Natural killer cell (primary cell): ENCODE measurements at regions of chr15 and their contacts with region 1.

Region 1: DNA sequence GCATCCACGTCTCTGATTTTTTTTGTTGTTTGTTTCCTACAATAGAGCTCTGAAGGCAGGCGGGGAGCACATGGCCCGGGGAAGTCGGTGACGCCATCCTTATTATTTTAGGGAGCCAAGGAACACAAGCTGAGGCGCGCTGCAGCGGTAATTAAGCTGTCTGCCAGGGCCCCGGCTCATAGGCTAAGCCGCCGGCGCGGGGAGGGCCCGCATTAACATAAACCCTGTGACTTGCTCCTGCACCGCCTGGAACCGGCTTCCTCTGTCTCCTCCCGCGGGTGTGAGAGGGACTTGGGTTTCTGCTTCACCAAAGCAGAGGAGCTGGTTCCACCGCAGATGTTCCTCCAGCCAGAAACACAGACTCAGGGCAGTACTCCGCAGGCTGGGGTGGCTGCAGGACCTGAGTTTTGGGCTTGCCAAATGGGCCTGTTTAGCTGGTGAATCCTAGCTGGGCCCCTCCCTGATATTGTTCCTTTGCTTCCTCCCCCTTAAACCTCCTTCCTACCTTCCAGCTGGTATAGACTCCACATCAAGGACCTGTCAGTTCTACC is 25.3 kb downstream of the ANP32A start:
- DNase-seq: peak; percentile 75 to 79
- ATAC-seq: peak; percentile 62 to 85 (median 63)
- H3K4me3 ChIP-seq: peak overlapping the region; percentile 6
- H3K4me3 Mint-ChIP-seq: peak overlapping the region; percentile 92
- H3K27ac ChIP-seq: peak overlapping the region; percentile 45
- H3K27ac Mint-ChIP-seq: peak overlapping the region; percentile 88 to 94
- H3K4me1 ChIP-seq: peaks cover 92% of the 10 kb centered on the region
- H3K4me1 Mint-ChIP-seq: peaks cover 96 to 98% of the 10 kb centered on the region in 2 donors
- H3K27me3 ChIP-seq: no peaks in the 10 kb centered on the region
- H3K27me3 Mint-ChIP-seq: no peaks in the 10 kb centered on the region
- CTCF ChIP-seq: no peak

Region 2: DNA sequence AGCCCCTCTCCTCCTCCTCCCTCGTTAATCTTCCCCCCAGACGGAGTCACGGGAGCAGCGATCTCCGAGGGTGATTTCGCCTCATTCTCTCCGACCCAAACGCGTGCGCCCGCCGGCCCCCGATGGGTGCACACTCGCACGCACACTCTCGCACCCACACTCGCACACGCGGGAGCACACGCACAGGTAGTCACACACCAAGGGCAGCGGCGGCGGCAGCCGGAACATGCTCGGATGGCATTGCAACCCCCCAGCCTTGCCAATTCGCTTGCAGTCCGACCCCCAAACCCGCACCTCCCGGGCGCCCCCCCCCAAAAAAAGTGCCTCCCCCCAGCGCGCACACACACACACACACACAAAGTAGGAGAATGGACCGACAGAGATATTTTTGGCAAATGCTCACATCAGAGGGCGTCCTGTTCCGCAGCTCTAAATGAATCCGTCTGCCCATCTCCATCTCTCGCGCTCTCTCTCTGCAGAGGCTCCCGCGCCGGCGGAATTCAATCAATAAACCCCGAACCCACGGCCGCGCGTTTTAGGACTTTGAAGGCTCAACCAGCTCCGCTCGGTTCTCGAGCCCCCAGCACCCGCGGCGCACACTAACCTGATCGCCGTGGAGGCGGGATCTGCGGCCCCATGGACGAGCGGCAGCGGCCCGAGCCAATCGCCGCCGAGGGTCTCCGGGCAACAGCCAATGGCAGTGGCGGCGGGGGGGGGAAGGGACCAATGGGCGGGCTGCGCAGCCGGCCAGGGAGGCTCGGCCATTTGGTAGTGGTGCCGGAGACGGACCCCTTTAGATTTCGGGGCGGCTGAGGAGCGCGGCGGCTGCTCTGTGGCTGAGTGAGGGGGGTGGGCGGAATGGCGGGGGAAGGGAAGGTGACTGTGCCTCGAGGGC is 25.2 kb after region 1 on chr15 and contains the start of gene ANP32A:
- intact Hi-C with region 1: loop called (anchors 1 kb)
- DNase-seq: peak; percentile 96 to 98
- ATAC-seq: peak; percentile 64 to 88 (median 80)
- H3K4me3 ChIP-seq: peak within 1 kb of the TSS; percentile 99
- H3K4me3 Mint-ChIP-seq: peak within 1 kb of the TSS; percentile 100
- H3K27ac ChIP-seq: peak within 1 kb of the TSS; percentile 85
- H3K27ac Mint-ChIP-seq: peak within 1 kb of the TSS; percentile 97 to 99
- H3K4me1 ChIP-seq: peaks cover 21% of the 10 kb centered on the region
- H3K4me1 Mint-ChIP-seq: peaks cover 40 to 43% of the 10 kb centered on the region in 2 donors
- H3K27me3 ChIP-seq: no peaks in the 10 kb centered on the region
- H3K27me3 Mint-ChIP-seq: no peaks in the 10 kb centered on the region
- CTCF ChIP-seq: no peak
- total RNA-seq, gene ANP32A: 133 to 150 (median 148) TPM